ENCODE measurements at regions of chr5 and their contacts with region 1.

Region 1: DNA sequence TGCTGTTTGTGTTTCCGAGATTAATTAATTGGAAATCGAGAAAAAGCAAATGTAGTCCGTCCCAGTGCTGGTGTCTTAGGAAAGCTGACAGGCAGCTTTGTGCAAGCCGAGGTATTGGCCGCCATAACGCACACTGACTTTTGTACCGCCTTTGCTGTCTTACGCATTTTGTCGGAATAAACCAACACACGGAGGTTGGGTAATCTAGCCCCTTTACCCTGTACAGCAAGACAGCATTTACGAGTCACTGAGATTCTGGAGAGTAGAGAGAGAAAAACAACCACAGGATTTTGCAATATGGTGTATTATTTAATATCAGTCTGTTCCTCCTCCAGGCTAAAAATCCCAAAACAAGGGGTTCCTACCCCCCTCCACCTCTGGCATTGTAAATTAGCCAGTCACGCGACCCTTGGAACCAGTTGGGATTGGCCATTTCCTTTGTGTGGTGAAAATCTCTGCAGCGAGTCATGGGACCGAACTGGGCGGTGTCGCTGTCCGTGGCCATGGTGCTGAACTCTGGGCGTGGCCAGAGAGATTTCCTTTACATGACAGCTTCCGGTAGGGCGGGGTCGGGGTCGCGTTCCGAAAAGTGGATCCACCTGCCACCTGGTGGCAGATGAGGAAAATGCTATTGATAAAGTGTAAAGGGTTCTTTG is 10.3 kb upstream of the PCDHB1 start:
- DNase-seq: peak; percentile 80
- H3K4me3 ChIP-seq: peak overlapping the region in 3 of 4 donors; percentile 3 to 29 (median 10)
- H3K27ac ChIP-seq: peak overlapping the region in 2 of 4 donors; percentile 6 to 36
- H3K4me1 ChIP-seq: peaks cover 0 to 4% (median 0%) of the 10 kb centered on the region in 4 donors
- H3K27me3 ChIP-seq: no peaks in the 10 kb centered on the region
- CTCF ChIP-seq: peak; percentile 52 to 62 (median 56)
- EP300 ChIP-seq: no peak
- POLR2A ChIP-seq: peak; percentile 15

Region 2: DNA sequence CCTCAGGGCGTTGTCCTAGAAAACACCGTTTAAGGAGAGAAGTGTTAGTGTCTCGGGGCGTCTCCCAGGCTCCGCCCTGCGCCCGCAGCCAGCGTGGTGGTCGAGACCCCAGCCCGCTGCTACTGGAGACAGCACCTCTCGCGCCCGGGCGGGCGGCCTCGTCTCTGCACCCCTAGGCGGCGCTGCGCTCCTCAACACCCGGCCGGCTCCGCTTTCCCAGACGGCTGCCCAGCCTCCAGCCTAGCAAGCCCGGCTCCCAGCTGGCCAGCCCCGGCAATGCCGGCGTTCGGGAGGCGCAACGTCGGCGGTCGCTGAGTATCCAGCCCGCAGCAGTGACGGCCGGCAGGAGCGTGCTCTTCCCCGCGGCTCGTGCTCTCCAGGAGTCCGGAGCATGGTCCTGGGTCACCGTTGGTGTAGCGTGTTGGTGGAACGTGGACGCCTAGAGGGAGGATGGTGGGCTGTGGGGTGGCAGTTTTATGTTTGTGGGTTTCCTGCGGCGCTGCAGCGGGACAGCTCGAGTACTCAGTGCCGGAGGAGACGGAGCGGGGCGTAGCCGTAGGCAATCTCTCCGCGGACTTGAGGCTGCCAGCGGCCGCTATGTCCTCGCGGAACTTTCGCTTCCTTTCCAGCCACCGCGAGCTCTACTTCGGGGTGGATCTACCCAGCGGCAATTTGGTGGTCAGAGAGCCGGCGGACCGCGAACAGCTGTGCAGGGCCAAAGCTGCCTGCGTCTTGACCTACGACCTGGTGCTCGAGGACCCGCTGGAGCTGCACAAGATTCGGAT is 114.3 kb before region 1 on chr5:
- in situ Hi-C with region 1: no loop called
- intact Hi-C with region 1: loop called (anchors 5 kb)
- DNase-seq: peak; percentile 46
- H3K4me3 ChIP-seq: peak overlapping the region; percentile 23 to 36 (median 32)
- H3K27ac ChIP-seq: peak overlapping the region in 3 of 4 donors; percentile 18 to 54 (median 39)
- H3K4me1 ChIP-seq: peaks cover 0 to 14% (median 6%) of the 10 kb centered on the region in 4 donors
- H3K27me3 ChIP-seq: peaks cover 36% of the 10 kb centered on the region
- CTCF ChIP-seq: peak; percentile 34 to 62 (median 52)
- EP300 ChIP-seq: no peak
- POLR2A ChIP-seq: no peak

Region 3: DNA sequence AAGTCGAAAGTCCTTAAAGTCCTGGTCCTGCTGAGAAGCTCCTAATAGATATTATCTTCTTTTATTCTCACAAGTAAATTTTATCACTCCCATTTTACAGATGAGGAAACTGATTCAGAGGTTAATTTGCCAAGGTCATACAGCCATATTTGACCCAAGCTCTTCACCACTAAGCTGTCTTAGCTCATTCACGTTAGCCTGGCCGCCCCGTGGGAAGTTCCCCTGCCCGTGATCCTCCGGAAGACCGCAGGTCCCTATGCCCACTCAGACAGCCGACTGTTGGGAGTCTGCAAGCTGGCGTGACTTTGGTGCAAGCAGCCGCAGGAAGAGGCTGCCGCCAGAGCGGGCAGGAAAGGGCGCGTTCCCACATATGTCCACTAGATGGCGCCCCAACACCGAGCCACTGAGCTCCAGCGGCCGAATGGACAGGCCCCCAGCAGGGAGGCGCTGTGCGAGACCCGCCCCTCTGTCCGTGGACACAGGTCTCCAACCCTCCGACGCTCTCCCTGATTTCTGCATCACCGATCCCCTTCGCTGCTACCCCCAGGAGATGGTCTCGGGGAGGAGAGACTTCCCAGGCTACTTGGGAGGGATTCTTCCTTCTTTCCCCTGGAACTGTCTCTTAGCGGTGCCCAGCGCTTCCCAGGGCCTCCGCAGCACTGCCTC is 651.1 kb after region 1 on chr5:
- in situ Hi-C with region 1: no loop called
- intact Hi-C with region 1: no loop called
- DNase-seq: peak; percentile 91
- H3K4me3 ChIP-seq: peak overlapping the region in 2 of 4 donors; percentile 17 to 32
- H3K27ac ChIP-seq: no peak overlapping the region
- H3K4me1 ChIP-seq: peaks cover 4 to 12% (median 4%) of the 10 kb centered on the region in 4 donors
- H3K27me3 ChIP-seq: no peaks in the 10 kb centered on the region
- CTCF ChIP-seq: peak; percentile 98 to 100 (median 99)
- EP300 ChIP-seq: no peak
- POLR2A ChIP-seq: no peak